Activated B cell treated with CpG ODN at 0.5 μM for 24 hours (primary cell): ENCODE measurements at regions of chr3 and their contacts with region 1.

Region 1: DNA sequence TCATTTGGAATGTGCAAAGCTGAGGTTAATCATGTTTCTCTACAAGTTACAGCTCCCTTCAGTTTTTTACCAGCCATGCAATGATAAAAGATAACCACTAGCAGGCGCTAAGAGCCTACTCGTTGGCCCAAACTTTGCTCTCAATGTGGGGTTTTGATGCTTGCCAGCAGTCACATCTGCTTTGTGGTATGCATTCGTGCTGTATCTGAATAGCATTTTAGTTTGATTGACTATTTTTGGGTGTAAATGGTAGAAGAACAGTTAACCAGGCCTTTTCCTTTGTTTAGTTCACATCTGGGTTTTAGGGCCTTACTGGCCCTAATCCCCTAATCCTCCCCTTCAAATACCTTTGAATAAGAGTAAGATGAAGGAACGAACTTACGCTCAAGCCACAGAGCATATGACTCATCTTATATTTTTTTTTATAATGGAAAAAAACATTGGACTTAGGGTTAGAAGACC is 4.4 kb upstream of the CLDN11 start:
- DNase-seq: no peak
- ATAC-seq: peak; percentile 72
- H3K4me3 Mint-ChIP-seq: no peak overlapping the region
- H3K27ac Mint-ChIP-seq: no peak overlapping the region
- H3K4me1 Mint-ChIP-seq: peaks cover 9% of the 10 kb centered on the region
- H3K27me3 Mint-ChIP-seq: peaks cover 15% of the 10 kb centered on the region
- CTCF ChIP-seq: peak; percentile 98

Region 2: GRCh38 chr3:170220871-170221270 is 193.4 kb before region 1 on chr3:
- CTCF ChIA-PET with region 1: no interaction called
- POLR2A ChIA-PET with region 1: no interaction called
- intact Hi-C with region 1: no loop called
- DNase-seq: no peak
- ATAC-seq: no peak
- H3K4me3 Mint-ChIP-seq: peak overlapping the region; percentile 11
- H3K27ac Mint-ChIP-seq: no peak overlapping the region
- H3K4me1 Mint-ChIP-seq: peaks cover 14% of the 10 kb centered on the region
- H3K27me3 Mint-ChIP-seq: no peaks in the 10 kb centered on the region
- CTCF ChIP-seq: no peak

Region 3: GRCh38 chr3:170307671-170308403 is 106.4 kb before region 1 on chr3:
- CTCF ChIA-PET with region 1: interaction called, 32 read pairs
- POLR2A ChIA-PET with region 1: no interaction called
- intact Hi-C with region 1: loop called (anchors 1 kb)
- DNase-seq: no peak
- ATAC-seq: no peak
- H3K4me3 Mint-ChIP-seq: no peak overlapping the region
- H3K27ac Mint-ChIP-seq: no peak overlapping the region
- H3K4me1 Mint-ChIP-seq: peaks cover 10% of the 10 kb centered on the region
- H3K27me3 Mint-ChIP-seq: no peaks in the 10 kb centered on the region
- CTCF ChIP-seq: no peak

Region 4: GRCh38 chr3:170397579-170398177 is 16.6 kb before region 1 on chr3:
- CTCF ChIA-PET with region 1: interaction called, 12 read pairs
- POLR2A ChIA-PET with region 1: no interaction called
- intact Hi-C with region 1: no loop called
- DNase-seq: no peak
- ATAC-seq: no peak
- H3K4me3 Mint-ChIP-seq: no peak overlapping the region
- H3K27ac Mint-ChIP-seq: no peak overlapping the region
- H3K4me1 Mint-ChIP-seq: peaks cover 22% of the 10 kb centered on the region
- H3K27me3 Mint-ChIP-seq: no peaks in the 10 kb centered on the region
- CTCF ChIP-seq: no peak

Region 5: DNA sequence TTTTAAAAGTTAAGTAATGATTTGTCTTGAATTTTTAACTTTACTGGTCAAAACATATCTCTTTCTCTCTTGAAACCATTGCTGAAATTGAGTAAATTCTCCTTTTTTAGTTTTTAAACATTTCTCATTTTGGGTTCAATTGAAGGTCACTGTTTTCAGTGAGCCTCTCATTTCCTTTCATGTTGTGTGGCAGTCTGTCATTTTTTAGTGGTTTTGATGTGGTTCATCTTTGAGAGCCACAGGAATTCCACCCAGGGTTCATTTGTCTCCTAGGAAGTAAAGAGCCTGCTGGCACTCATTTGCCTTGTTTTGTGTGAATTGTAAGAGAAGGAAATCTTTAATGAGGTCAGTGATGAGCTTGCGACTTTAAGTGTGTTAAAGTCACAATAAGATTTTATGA is 14.8 kb after region 1 on chr3:
- CTCF ChIA-PET with region 1: no interaction called
- POLR2A ChIA-PET with region 1: no interaction called
- intact Hi-C with region 1: no loop called
- DNase-seq: no peak
- ATAC-seq: no peak
- H3K4me3 Mint-ChIP-seq: no peak overlapping the region
- H3K27ac Mint-ChIP-seq: no peak overlapping the region
- H3K4me1 Mint-ChIP-seq: no peaks in the 10 kb centered on the region
- H3K27me3 Mint-ChIP-seq: peaks cover 5% of the 10 kb centered on the region
- CTCF ChIP-seq: no peak

Region 6: DNA sequence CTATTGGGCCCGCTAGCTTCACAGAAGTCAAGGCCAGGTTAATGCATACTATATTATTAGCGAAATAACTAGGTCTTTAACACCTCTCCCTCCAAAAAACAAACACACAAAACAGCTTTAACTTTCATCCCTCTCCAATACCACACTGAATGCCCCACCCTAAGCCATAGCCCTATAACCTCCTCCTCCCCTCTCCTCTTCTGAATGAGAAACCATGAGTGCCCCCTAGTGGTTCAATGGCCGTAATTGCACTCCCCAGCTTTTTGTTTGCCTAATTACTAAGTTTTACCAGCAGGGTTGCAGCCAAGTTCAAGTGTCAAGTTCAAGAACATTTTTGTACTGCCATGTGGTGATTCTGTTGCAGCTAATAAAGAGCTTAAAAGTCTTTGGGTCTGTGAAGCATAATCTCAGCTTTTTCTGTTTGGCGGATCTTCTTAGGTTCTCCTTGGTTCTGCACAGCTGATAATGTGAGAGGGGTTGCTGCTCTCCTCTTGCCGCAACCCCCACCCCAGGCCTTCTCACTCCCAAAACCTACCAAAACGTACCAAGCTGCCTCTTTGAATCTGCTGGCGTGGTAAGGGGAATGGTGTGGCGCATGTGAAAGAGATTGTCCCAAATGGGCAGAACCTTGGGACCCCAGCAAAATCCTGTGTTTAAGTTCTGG is 397.8 kb after region 1 on chr3:
- CTCF ChIA-PET with region 1: interaction called, 46 read pairs
- POLR2A ChIA-PET with region 1: no interaction called
- intact Hi-C with region 1: loop called (anchors 1 kb)
- DNase-seq: peak; percentile 30
- ATAC-seq: peak; percentile 97
- H3K4me3 Mint-ChIP-seq: no peak overlapping the region
- H3K27ac Mint-ChIP-seq: no peak overlapping the region
- H3K4me1 Mint-ChIP-seq: no peaks in the 10 kb centered on the region
- H3K27me3 Mint-ChIP-seq: no peaks in the 10 kb centered on the region
- CTCF ChIP-seq: peak; percentile 84

Region 7: DNA sequence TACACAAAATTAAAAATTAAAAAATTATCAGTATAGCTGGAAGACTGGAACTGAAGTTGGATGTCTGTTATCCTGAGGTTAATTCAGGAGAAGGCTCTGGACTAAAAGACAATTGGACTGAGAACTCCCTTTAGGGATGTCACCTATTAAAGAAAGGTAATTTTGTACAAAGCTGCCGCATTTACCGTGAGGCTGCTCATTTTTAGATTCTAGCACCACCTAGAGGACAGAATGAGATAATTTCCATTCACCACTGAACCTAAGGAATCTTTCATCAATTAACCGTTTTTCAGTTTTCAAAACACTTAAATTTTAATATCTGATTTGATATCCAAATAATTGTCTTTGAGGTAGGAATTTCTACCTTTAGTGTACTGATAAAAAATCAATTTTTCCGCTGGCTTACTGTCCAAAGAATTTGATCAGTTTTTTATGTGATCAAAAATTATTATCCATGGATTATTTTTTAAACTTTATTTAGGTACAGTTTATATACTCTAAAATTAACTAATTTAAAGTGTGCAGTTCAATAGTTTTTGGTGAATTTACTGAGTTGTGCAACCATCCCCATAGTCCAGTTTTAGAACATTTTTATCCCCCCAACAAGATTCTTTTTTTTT is 1152.7 kb after region 1 on chr3:
- CTCF ChIA-PET with region 1: interaction called, 3 read pairs
- POLR2A ChIA-PET with region 1: no interaction called
- intact Hi-C with region 1: loop called (anchors 1 kb)
- DNase-seq: no peak
- ATAC-seq: peak; percentile 31
- H3K4me3 Mint-ChIP-seq: no peak overlapping the region
- H3K27ac Mint-ChIP-seq: no peak overlapping the region
- H3K4me1 Mint-ChIP-seq: no peaks in the 10 kb centered on the region
- H3K27me3 Mint-ChIP-seq: peaks cover 3% of the 10 kb centered on the region
- CTCF ChIP-seq: peak; percentile 77

Region 8: DNA sequence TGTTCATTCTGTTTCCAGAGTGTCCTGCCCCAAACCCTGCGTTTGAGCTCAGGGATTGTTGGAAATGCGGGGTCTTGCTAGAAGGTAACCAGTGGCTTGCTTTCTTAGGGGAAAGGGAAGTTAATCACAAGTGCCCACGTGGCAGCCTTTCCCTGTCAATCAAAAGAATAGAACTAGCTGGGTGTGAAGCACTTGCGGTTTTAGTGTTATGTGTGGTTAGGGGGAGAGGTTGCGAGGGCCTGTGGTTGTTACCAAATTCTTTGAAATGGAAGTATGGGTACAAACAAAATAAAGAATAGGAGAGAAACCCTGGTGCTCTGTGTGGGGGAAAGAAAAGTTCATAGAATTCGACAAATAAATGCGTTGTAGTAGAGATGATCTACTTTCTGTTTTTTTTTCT is 1692.8 kb after region 1 on chr3:
- CTCF ChIA-PET with region 1: no interaction called
- POLR2A ChIA-PET with region 1: no interaction called
- intact Hi-C with region 1: no loop called
- DNase-seq: no peak
- ATAC-seq: peak; percentile 56
- H3K4me3 Mint-ChIP-seq: peak overlapping the region; percentile 55
- H3K27ac Mint-ChIP-seq: peak overlapping the region; percentile 43
- H3K4me1 Mint-ChIP-seq: peaks cover 34% of the 10 kb centered on the region
- H3K27me3 Mint-ChIP-seq: peaks cover 50% of the 10 kb centered on the region
- CTCF ChIP-seq: no peak